ENCODE measurements at regions of chr20 and their contacts with region 1.

Region 1: DNA sequence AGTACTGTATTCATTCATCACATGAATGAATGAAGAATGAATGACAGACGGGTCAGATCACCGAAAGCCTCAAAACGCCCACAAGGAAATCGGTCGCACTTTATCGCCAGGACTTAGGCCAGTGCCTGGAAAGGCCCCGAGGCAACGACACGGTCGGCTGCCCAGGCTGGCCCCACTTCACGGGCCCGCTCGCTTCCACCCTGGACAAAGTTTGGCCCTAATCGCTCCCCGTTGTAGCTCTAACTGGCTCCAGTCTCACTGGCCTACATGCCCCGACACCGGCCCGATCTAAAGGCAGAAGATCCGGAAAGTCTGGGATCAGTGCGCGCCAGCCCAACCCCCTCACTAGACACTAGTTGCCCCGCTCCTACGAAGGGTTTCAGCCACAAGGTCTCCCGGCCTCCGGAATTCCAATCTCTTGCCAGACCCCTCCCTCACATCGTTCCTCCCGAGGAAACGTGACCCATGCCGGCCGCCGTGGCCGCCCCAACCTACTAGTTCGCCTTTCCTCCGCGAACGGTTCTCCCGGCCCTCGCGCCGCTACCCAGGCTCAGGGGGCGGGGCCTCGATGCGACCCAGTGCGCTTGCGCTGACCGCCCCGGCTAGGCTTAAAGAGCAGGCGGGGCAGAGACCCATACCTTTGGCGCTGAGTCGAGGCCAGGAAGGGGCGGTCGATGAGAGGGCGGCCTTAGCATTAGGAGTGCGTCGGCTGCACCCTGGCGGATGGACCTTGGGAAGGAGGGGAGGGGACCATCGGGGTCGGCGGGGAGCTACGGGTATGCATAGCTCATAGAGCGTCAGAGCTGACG is at the starts of genes GSS and MYH7B:
- DNase-seq: peak; percentile 90 to 99 (median 97)

Region 2: GRCh38 chr20:34872622-34873224 is 82.7 kb before region 1 on chr20 and contains the start of gene GGT7:
- intact Hi-C with region 1: loop called (anchors 5 kb)
- DNase-seq: peak; percentile 62 to 96 (median 89)

Measured in head of caudate nucleus (tissue), 42 donors.